Common myeloid progenitor, CD34-positive (primary cell): ENCODE measurements at regions of chr12 and their contacts with region 1.

Region 1: GRCh38 chr12:120833849-120834248 is 70.3 kb downstream of the SPPL3 start:
- DNase-seq: peak in 2 of 3 donors; percentile 21 to 35
- H3K4me3 ChIP-seq: no peak overlapping the region
- H3K27ac ChIP-seq: no peak overlapping the region
- H3K4me1 ChIP-seq: peaks cover 9 to 33% (median 25%) of the 10 kb centered on the region in 4 experiments
- H3K27me3 ChIP-seq: no peaks in the 10 kb centered on the region

Region 2: GRCh38 chr12:120822832-120823503 is 10.9 kb before region 1 on chr12:
- CTCF ChIA-PET with region 1: interaction called, 19 read pairs
- POLR2A ChIA-PET with region 1: no interaction called
- DNase-seq: no peak
- H3K4me3 ChIP-seq: no peak overlapping the region
- H3K27ac ChIP-seq: no peak overlapping the region
- H3K4me1 ChIP-seq: no peaks in the 10 kb centered on the region
- H3K27me3 ChIP-seq: no peaks in the 10 kb centered on the region

Region 3: GRCh38 chr12:120892265-120892664 is 58.4 kb after region 1 on chr12:
- CTCF ChIA-PET with region 1: no interaction called
- POLR2A ChIA-PET with region 1: no interaction called
- DNase-seq: peak in 2 of 3 donors; percentile 59 to 72
- H3K4me3 ChIP-seq: no peak overlapping the region
- H3K27ac ChIP-seq: no peak overlapping the region
- H3K4me1 ChIP-seq: peaks cover 2 to 18% (median 5%) of the 10 kb centered on the region in 4 experiments
- H3K27me3 ChIP-seq: no peaks in the 10 kb centered on the region